ENCODE measurements at regions of chr5 and their contacts with region 1.

Region 1: DNA sequence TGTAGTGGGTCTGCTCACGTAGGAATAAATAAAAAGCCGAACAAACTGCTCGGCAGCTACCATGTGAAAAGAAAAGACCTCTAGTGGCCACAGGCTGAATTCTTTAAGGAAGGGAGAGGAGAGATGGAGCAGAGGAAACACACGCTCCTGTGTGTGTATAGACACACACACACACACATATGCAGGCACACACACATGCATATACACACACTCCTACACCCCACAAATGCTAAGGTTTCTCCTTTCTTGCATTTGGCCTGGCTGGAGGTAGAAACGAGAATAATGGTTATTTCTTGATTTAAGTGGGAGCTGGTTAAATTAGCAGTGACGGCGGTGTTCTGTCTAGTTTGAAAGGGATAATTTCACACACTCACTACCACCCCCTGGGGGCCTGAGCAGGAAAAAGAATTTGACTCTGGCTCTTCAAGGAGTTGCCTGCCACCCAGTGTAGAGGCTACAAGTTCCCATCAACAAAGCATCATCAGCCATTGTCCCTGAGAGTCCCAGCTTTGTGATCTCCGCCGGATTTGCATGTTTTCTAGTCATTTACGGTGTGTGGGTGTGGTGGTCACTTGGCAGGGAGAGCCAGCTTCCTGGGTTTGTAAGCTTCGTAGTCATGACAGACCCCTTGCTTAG is at the start of gene INSYN2B:
- DNase-seq: peak; percentile 84
- ATAC-seq: peak; percentile 89
- H3K4me3 Mint-ChIP-seq: peak within 1 kb of the TSS; percentile 69
- H3K27ac Mint-ChIP-seq: peak within 1 kb of the TSS; percentile 70
- H3K4me1 Mint-ChIP-seq: peaks cover 50% of the 10 kb centered on the region
- H3K27me3 Mint-ChIP-seq: peaks cover 36% of the 10 kb centered on the region
- CTCF ChIP-seq: peak; percentile 46
- total RNA-seq, gene INSYN2B: not detected in 3 replicates

Region 2: DNA sequence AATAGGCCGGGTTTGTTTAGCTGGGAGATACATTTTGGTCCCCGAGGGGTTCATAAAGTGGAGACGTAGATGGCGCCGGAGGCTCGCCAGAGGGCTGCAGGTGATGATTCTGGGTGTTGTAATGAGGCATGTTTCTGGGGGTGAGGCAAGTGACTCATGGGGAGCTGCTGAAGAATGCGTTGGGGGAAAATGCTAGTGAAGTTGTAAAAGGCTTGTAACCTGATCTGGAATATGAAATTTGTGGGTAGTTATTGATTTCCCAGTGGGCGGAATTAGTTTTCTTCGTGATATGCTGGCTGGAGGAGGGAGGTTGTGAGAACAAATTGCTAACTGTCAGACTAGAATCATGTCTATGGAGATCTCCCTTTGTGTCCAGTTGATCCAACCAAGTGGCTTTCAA is 185.2 kb before region 1 on chr5:
- CTCF ChIA-PET with region 1: interaction called, 20 read pairs
- POLR2A ChIA-PET with region 1: no interaction called
- DNase-seq: no peak
- ATAC-seq: peak; percentile 60
- H3K4me3 Mint-ChIP-seq: no peak overlapping the region
- H3K27ac Mint-ChIP-seq: no peak overlapping the region
- H3K4me1 Mint-ChIP-seq: peaks cover 26% of the 10 kb centered on the region
- H3K27me3 Mint-ChIP-seq: peaks cover 5% of the 10 kb centered on the region; the same call in 1 of the 2 replicates
- CTCF ChIP-seq: no peak

Region 3: GRCh38 chr5:169836835-169837536 is 143.6 kb before region 1 on chr5:
- CTCF ChIA-PET with region 1: interaction called, 11 read pairs
- POLR2A ChIA-PET with region 1: no interaction called
- DNase-seq: no peak
- ATAC-seq: peak; percentile 56; the same call in 1 of the 2 replicates
- H3K4me3 Mint-ChIP-seq: no peak overlapping the region
- H3K27ac Mint-ChIP-seq: no peak overlapping the region
- H3K4me1 Mint-ChIP-seq: no peaks in the 10 kb centered on the region
- H3K27me3 Mint-ChIP-seq: no peaks in the 10 kb centered on the region
- CTCF ChIP-seq: no peak

Region 4: GRCh38 chr5:169945831-169946261 is 34.7 kb before region 1 on chr5:
- CTCF ChIA-PET with region 1: interaction called, 13 read pairs
- POLR2A ChIA-PET with region 1: no interaction called
- DNase-seq: peak; percentile 16
- ATAC-seq: peak; percentile 80
- H3K4me3 Mint-ChIP-seq: no peak overlapping the region
- H3K27ac Mint-ChIP-seq: no peak overlapping the region
- H3K4me1 Mint-ChIP-seq: peaks cover 19% of the 10 kb centered on the region
- H3K27me3 Mint-ChIP-seq: no peaks in the 10 kb centered on the region; the same call in 1 of the 2 replicates
- CTCF ChIP-seq: no peak

Region 5: GRCh38 chr5:169991115-169991869 is 10.8 kb after region 1 on chr5:
- CTCF ChIA-PET with region 1: interaction called, 22 read pairs
- POLR2A ChIA-PET with region 1: no interaction called
- DNase-seq: no peak
- ATAC-seq: no peak
- H3K4me3 Mint-ChIP-seq: no peak overlapping the region
- H3K27ac Mint-ChIP-seq: no peak overlapping the region
- H3K4me1 Mint-ChIP-seq: 0 out of 2 replicates have a peak, but pooled peaks cover 3% of the 10 kb centered on the region
- H3K27me3 Mint-ChIP-seq: no peaks in the 10 kb centered on the region
- CTCF ChIP-seq: no peak

Region 6: DNA sequence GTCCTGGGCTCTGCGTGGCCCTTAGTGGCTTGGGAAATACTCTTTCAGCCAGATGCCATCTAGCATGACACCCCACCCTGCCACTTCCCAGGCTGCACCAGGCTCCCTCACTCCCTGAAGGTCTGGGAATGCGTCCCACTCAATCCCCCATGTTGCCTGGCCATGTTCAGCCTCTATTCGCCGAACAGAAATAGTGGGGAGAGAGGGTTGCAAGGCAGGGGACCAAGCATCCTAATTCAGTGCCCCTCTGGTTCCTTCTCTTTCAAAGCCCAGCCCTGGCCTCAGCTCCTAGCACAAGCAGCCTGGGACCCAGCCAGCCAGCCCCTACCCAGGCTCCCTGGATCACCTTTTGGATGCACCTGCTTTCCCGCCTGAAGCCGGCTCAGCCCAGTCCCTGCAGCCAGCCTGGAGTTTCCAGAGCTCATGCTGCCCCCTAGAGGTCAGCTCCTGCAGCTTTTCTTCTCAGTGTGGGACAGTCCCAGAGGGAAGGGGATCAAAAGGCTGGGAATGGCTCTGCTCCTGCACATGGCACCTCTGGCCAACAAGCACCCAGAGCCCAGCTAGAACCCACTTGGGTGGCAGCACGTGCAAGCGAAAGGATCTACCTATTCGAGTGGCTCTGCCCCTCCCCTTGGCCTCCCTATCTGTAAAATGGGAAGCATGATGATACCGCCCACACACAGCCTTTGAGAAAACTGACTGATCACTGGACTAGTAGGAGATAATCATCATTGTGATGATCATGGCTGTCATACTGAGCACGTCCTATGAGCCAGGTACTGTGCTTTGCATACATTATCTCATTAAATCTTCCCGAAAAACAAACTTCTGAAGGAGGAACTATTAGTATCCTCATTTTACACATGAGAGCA is 203.5 kb after region 1 on chr5:
- CTCF ChIA-PET with region 1: interaction called, 16 read pairs
- POLR2A ChIA-PET with region 1: no interaction called
- DNase-seq: peak; percentile 94
- ATAC-seq: peak; percentile 98
- H3K4me3 Mint-ChIP-seq: no peak overlapping the region
- H3K27ac Mint-ChIP-seq: no peak overlapping the region
- H3K4me1 Mint-ChIP-seq: peaks cover under 1% of the 10 kb centered on the region; the same call in 1 of the 2 replicates
- H3K27me3 Mint-ChIP-seq: no peaks in the 10 kb centered on the region
- CTCF ChIP-seq: peak; percentile 67

Measured in WTC11 (cell line).